ENCODE measurements at regions of chr10 and their contacts with region 1.

Region 1: DNA sequence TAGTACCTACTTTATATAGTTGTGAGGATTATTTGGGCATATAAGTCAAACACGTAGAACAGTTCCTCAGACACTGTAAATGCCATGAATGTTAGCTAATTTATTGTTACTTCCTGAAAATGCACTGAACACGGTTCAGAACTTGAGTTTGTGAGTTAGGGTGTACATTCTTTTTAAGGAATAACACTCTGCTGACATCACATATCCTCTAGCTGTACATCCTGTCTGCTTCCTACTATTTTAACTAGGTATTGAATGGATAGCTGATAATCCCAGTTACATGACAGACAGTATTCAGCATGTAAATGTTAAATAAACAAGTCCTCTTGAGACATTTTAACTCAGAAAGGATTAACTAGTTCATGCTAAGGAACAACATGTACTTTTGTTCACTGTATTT is 16.0 kb downstream of the SAMD8 start:
- DNase-seq: no peak
- ATAC-seq: peak in 1 of 4 donors; percentile 16
- H3K4me3 ChIP-seq: no peak overlapping the region
- H3K27ac ChIP-seq: peak overlapping the region; percentile 7
- H3K4me1 ChIP-seq: peaks cover 61% of the 10 kb centered on the region
- H3K27me3 ChIP-seq: no peaks in the 10 kb centered on the region
- CTCF ChIP-seq: no peak

Region 2: GRCh38 chr10:75179657-75180177 is 52.2 kb after region 1 on chr10:
- intact Hi-C with region 1: loop called in 1 of 2 experiments (anchors 5 kb)
- DNase-seq: no peak
- ATAC-seq: no peak
- H3K4me3 ChIP-seq: no peak overlapping the region
- H3K27ac ChIP-seq: no peak overlapping the region
- H3K4me1 ChIP-seq: no peaks in the 10 kb centered on the region
- H3K27me3 ChIP-seq: no peaks in the 10 kb centered on the region
- CTCF ChIP-seq: no peak